Endothelial cell of umbilical vein (primary cell): ENCODE measurements at regions of chr4 and their contacts with region 1.

Region 1: DNA sequence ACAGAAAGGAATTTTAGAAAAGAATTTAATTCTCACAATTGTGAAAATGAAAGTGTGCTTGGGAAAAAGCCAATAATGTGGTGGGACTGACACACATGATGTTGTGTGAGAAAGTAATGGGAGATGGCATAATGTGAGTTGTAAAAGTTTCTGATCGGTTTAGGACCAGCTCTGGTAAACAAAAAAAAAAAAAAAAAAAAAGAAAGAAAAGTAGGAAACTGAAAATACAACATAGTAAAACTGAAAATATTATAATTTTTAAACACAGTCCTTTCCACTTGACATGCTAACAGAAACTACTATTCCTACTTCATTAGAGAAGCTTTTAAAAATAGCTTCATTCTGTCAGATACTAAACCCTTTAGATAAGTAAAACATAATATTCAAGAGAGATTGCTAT is 28.2 kb downstream of the RAP1GDS1 start:
- DNase-seq: no peak
- H3K4me3 ChIP-seq: no peak overlapping the region
- H3K27ac ChIP-seq: no peak overlapping the region
- H3K4me1 ChIP-seq: no peaks in the 10 kb centered on the region
- H3K27me3 ChIP-seq: no peaks in the 10 kb centered on the region
- CTCF ChIP-seq: no peak
- POLR2A ChIP-seq: no peak

Region 2: GRCh38 chr4:98162696-98163095 is 126.7 kb before region 1 on chr4:
- CTCF ChIA-PET with region 1: no interaction called
- POLR2A ChIA-PET with region 1: interaction called, 14 read pairs
- dilution Hi-C with region 1: no loop called
- intact Hi-C with region 1: no loop called
- DNase-seq: no peak
- H3K4me3 ChIP-seq: no peak overlapping the region
- H3K27ac ChIP-seq: no peak overlapping the region
- H3K4me1 ChIP-seq: no peaks in the 10 kb centered on the region
- H3K27me3 ChIP-seq: peaks cover 0 to 3% of the 10 kb centered on the region in 2 experiments
- CTCF ChIP-seq: no peak
- POLR2A ChIP-seq: no peak

Region 3: GRCh38 chr4:98310867-98311266 is 21.5 kb after region 1 on chr4:
- CTCF ChIA-PET with region 1: interaction called, 3 read pairs
- POLR2A ChIA-PET with region 1: no interaction called
- dilution Hi-C with region 1: no loop called
- intact Hi-C with region 1: loop called (anchors 2 kb)
- DNase-seq: no peak
- H3K4me3 ChIP-seq: no peak overlapping the region
- H3K27ac ChIP-seq: no peak overlapping the region
- H3K4me1 ChIP-seq: peaks cover 12% of the 10 kb centered on the region
- H3K27me3 ChIP-seq: no peaks in the 10 kb centered on the region
- CTCF ChIP-seq: no peak
- POLR2A ChIP-seq: no peak